Calu3 (cell line): ENCODE measurements at regions of chr22 and their contacts with region 1.

Region 1: GRCh38 chr22:49548356-49549211 is 279.1 kb downstream of the BRD1 start:
- DNase-seq: peak; percentile 57
- H3K4me3 Mint-ChIP-seq: peak overlapping the region; percentile 43
- H3K27ac Mint-ChIP-seq: peak overlapping the region; percentile 41
- H3K4me1 Mint-ChIP-seq: peaks cover 23% of the 10 kb centered on the region
- H3K27me3 Mint-ChIP-seq: no peaks in the 10 kb centered on the region
- CTCF ChIP-seq: peak; percentile 21

Region 2: DNA sequence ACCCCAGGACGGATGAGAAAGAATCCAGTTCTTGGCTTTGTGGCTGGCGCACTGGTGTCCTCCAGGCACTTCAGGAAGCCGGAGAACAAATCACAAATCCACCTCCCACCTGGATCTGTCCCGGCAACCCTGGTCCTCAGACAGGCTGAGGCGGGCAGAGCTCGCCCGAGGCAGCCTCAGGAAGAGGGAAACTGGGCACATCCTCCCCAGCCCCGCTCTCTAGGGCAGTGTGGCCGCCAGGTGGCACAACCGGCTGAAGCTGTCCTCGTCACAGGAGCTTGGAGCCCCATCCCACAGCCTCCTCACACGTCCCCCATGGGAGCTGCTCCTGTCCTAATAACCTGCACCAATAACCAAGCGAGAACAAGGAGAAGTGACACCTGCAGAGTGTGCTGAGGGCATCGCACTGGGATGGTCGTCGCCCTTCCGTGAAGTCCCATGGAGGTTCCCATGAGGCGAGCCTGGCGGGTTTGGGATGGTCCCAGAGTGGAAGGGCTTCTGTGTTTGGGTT is 114.4 kb before region 1 on chr22:
- CTCF ChIA-PET with region 1: interaction called, 3 read pairs
- intact Hi-C with region 1: loop called (anchors 5 kb)
- DNase-seq: peak; percentile 71
- H3K4me3 Mint-ChIP-seq: no peak overlapping the region
- H3K27ac Mint-ChIP-seq: no peak overlapping the region
- H3K4me1 Mint-ChIP-seq: no peaks in the 10 kb centered on the region
- H3K27me3 Mint-ChIP-seq: peaks cover 63% of the 10 kb centered on the region
- CTCF ChIP-seq: peak; percentile 37

Region 3: GRCh38 chr22:49481659-49482399 is 66.8 kb before region 1 on chr22:
- CTCF ChIA-PET with region 1: interaction called, 3 read pairs
- intact Hi-C with region 1: loop called (anchors 1 kb)
- DNase-seq: peak; percentile 13
- H3K4me3 Mint-ChIP-seq: peak overlapping the region; percentile 61
- H3K27ac Mint-ChIP-seq: no peak overlapping the region
- H3K4me1 Mint-ChIP-seq: peaks cover 18% of the 10 kb centered on the region
- H3K27me3 Mint-ChIP-seq: peaks cover 30% of the 10 kb centered on the region
- CTCF ChIP-seq: no peak

Region 4: GRCh38 chr22:49502126-49502826 is 46.3 kb before region 1 on chr22:
- CTCF ChIA-PET with region 1: interaction called, 4 read pairs
- intact Hi-C with region 1: loop called (anchors 2 kb)
- DNase-seq: peak; percentile 72
- H3K4me3 Mint-ChIP-seq: peak overlapping the region; percentile 32
- H3K27ac Mint-ChIP-seq: peak overlapping the region; percentile 23
- H3K4me1 Mint-ChIP-seq: no peaks in the 10 kb centered on the region
- H3K27me3 Mint-ChIP-seq: no peaks in the 10 kb centered on the region
- CTCF ChIP-seq: no peak

Region 5: DNA sequence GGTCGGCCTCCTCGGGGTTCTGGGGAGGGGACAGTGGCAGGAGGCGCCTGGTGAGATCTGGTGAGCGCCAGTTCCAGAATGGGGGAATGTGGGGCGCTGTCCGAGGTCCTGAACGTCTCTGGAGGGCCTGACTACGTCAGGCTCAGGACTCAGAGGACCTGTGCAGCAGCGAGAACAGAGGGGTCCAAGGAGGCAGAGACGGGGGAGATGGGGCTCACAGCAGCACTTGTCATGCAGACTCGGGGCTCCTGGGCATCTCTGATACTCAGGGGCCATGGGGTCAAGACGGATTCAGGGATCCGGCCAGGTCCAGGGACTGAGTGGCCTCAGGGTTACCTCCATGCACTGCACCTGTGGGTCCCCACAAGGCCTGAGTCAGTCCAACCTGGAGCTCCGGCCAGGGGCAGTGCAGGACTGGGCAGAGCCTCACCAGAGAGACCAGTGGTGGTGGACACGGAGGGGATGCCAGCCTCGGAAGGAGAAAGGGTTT is 186.9 kb after region 1 on chr22:
- CTCF ChIA-PET with region 1: no interaction called
- intact Hi-C with region 1: no loop called
- DNase-seq: no peak
- H3K4me3 Mint-ChIP-seq: no peak overlapping the region
- H3K27ac Mint-ChIP-seq: no peak overlapping the region
- H3K4me1 Mint-ChIP-seq: no peaks in the 10 kb centered on the region
- H3K27me3 Mint-ChIP-seq: peaks cover 98% of the 10 kb centered on the region
- CTCF ChIP-seq: no peak